Activated B cell treated with CpG ODN at 0.5 μM for 24 hours (primary cell): ENCODE measurements at regions of chr7 and their contacts with region 1.

Region 1: GRCh38 chr7:94276795-94277194 is 117.9 kb upstream of the COL1A2 start:
- DNase-seq: no peak
- ATAC-seq: peak; percentile 64
- H3K4me3 Mint-ChIP-seq: no peak overlapping the region
- H3K27ac Mint-ChIP-seq: no peak overlapping the region
- H3K4me1 Mint-ChIP-seq: no peaks in the 10 kb centered on the region
- H3K27me3 Mint-ChIP-seq: peaks cover 10% of the 10 kb centered on the region
- CTCF ChIP-seq: no peak

Region 2: GRCh38 chr7:93245525-93246432 is 1031.0 kb before region 1 on chr7:
- CTCF ChIA-PET with region 1: no interaction called
- POLR2A ChIA-PET with region 1: no interaction called
- intact Hi-C with region 1: loop called (anchors 2 kb)
- DNase-seq: no peak
- ATAC-seq: peak; percentile 25
- H3K4me3 Mint-ChIP-seq: no peak overlapping the region
- H3K27ac Mint-ChIP-seq: no peak overlapping the region
- H3K4me1 Mint-ChIP-seq: peaks cover 2% of the 10 kb centered on the region
- H3K27me3 Mint-ChIP-seq: no peaks in the 10 kb centered on the region
- CTCF ChIP-seq: peak; percentile 42

Region 3: GRCh38 chr7:93442478-93443224 is 834.1 kb before region 1 on chr7:
- CTCF ChIA-PET with region 1: no interaction called
- POLR2A ChIA-PET with region 1: no interaction called
- intact Hi-C with region 1: loop called (anchors 1 kb)
- DNase-seq: no peak
- ATAC-seq: peak; percentile 54
- H3K4me3 Mint-ChIP-seq: no peak overlapping the region
- H3K27ac Mint-ChIP-seq: no peak overlapping the region
- H3K4me1 Mint-ChIP-seq: no peaks in the 10 kb centered on the region
- H3K27me3 Mint-ChIP-seq: peaks cover 6% of the 10 kb centered on the region
- CTCF ChIP-seq: no peak

Region 4: DNA sequence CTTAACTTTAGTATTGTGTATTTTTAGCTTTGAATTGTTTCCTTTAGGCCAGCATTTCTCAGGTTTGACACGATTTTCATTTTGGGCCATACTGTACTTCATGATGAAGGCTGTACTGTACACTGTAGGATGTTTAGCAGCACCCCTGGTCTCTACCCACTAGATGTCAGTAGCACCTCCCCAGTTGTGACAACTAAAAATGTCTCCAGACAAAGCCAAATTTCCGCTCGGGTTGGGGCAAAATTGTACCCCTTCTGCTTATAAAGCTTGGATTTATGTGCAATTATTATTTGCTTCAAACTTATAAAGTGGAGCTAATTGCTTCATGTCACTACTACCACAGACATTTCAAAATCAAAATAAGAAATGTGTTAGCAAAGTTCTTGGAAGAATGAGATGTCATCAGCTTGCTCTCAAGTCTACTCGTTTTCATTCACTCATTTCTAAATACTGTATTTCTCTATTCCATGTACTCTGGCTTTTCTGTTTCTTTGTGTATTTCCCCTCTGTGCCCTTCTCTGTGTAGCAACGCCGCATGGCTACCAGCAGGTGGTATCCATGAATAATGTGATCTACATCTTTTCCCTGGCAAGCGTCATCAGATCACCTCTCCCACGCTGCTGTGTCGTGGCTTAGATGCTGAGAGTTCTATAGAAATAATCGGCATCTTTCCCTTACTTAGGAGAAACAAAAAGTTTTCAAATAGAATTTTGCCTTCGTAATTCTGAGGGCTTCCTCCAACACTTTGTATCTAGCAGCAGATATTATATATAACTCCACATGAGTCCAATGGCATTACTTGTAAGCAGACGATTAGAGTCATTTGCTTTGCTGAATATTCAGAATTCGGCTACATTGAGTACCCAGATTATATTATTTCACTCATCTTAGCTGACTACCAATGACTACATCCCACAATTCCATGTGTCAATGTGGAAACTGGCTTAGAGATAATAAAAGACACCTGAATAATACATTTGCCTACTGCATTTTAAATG is 654.5 kb before region 1 on chr7:
- CTCF ChIA-PET with region 1: no interaction called
- POLR2A ChIA-PET with region 1: no interaction called
- intact Hi-C with region 1: loop called (anchors 10 kb)
- DNase-seq: no peak
- ATAC-seq: no peak
- H3K4me3 Mint-ChIP-seq: no peak overlapping the region
- H3K27ac Mint-ChIP-seq: no peak overlapping the region
- H3K4me1 Mint-ChIP-seq: no peaks in the 10 kb centered on the region
- H3K27me3 Mint-ChIP-seq: peaks cover 1% of the 10 kb centered on the region
- CTCF ChIP-seq: no peak

Region 5: GRCh38 chr7:93715234-93715633 is 561.6 kb before region 1 on chr7:
- CTCF ChIA-PET with region 1: no interaction called
- POLR2A ChIA-PET with region 1: no interaction called
- intact Hi-C with region 1: loop called (anchors 1 kb)
- DNase-seq: peak; percentile 14
- ATAC-seq: no peak
- H3K4me3 Mint-ChIP-seq: no peak overlapping the region
- H3K27ac Mint-ChIP-seq: no peak overlapping the region
- H3K4me1 Mint-ChIP-seq: no peaks in the 10 kb centered on the region
- H3K27me3 Mint-ChIP-seq: peaks cover 10% of the 10 kb centered on the region
- CTCF ChIP-seq: no peak

Region 6: DNA sequence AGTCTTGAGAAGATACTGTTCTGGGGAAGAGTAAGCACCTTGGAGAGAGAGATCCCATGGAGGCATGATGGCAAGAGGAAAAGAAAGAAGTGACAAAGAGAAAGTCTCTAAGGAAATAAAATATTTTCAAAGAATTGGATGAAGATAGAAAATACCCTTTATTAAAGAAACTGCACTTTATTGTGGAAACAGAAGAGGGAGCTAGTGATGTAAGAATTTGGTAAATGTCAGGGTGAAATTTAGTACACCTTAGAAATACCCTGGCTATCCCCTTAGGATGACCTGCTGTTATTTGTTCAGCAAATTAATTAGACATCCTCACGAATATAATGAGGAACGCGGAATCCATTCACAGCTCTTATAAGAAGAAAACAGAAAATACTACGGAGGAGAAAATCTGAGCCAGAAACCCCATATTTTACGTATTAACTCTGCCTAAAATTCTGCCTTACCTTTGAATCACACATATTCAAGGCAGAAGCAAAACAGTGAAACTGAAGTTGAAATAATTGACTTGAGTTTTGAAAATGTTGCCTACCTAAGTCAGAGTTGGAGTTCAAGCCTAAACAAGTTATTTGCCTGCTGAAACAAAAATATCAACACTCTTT is 476.9 kb before region 1 on chr7:
- CTCF ChIA-PET with region 1: interaction called, 3 read pairs
- POLR2A ChIA-PET with region 1: no interaction called
- intact Hi-C with region 1: loop called (anchors 1 kb)
- DNase-seq: no peak
- ATAC-seq: no peak
- H3K4me3 Mint-ChIP-seq: no peak overlapping the region
- H3K27ac Mint-ChIP-seq: no peak overlapping the region
- H3K4me1 Mint-ChIP-seq: no peaks in the 10 kb centered on the region
- H3K27me3 Mint-ChIP-seq: peaks cover 2% of the 10 kb centered on the region
- CTCF ChIP-seq: no peak

Region 7: GRCh38 chr7:93902777-93903423 is 373.9 kb before region 1 on chr7:
- CTCF ChIA-PET with region 1: interaction called, 6 read pairs
- POLR2A ChIA-PET with region 1: no interaction called
- intact Hi-C with region 1: loop called (anchors 1 kb)
- DNase-seq: no peak
- ATAC-seq: no peak
- H3K4me3 Mint-ChIP-seq: no peak overlapping the region
- H3K27ac Mint-ChIP-seq: no peak overlapping the region
- H3K4me1 Mint-ChIP-seq: no peaks in the 10 kb centered on the region
- H3K27me3 Mint-ChIP-seq: peaks cover 17% of the 10 kb centered on the region
- CTCF ChIP-seq: peak; percentile 74

Region 8: DNA sequence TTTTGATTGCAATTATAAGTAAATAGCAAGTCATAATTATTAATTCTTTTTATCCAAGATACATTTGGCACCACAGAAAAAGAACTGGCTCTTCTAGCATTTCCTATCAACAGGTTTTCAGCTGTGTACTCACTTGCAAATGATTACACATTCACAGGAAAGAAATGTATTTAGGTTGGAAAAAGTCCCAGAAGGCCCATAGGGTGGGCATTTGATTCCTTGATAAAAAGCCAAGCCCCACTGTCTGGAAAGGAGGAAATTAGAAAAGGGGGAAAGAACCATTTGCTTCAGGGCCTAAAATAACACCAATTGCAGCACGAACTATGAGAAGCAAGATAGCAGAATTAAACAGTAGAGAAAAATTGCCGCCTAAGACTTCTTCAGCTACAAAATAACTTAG is 37.1 kb after region 1 on chr7:
- CTCF ChIA-PET with region 1: no interaction called
- POLR2A ChIA-PET with region 1: no interaction called
- intact Hi-C with region 1: no loop called
- DNase-seq: no peak
- ATAC-seq: no peak
- H3K4me3 Mint-ChIP-seq: no peak overlapping the region
- H3K27ac Mint-ChIP-seq: no peak overlapping the region
- H3K4me1 Mint-ChIP-seq: no peaks in the 10 kb centered on the region
- H3K27me3 Mint-ChIP-seq: peaks cover 2% of the 10 kb centered on the region
- CTCF ChIP-seq: no peak